AG04449 (cell line): ENCODE measurements at regions of chr10 and their contacts with region 1.

Region 1: GRCh38 chr10:119207367-119207668 is at the start of gene GRK5:
- DNase-seq: peak; percentile 74
- H3K4me3 ChIP-seq: peak within 1 kb of the TSS; percentile 79
- CTCF ChIP-seq: no peak

Region 2: DNA sequence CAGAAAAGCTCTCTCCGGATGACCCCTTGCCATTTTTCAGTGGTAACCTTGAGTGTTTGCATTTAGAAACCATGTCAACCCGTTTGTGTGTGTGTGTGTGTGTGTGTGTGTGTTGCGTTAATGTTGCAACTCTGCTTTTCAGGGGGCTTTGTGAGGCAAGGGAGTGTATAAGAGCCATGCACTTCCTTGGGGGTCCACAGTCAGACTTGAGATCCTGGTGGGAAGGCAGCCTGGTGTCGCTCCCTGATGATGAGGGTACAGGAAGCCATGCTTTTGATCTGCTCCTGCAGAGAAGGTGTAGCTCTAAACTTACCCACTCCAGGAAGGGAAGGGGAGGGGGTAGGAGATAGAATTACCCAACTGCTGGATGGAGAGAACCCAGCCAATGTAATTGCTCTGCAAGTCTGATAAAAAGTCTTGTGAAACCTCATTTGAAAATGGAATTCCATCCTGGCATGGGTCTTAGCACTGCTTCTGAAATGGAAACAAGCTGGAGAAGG is 10.7 kb after region 1 on chr10:
- CTCF ChIA-PET with region 1: interaction called, 80 read pairs
- POLR2A ChIA-PET with region 1: no interaction called
- DNase-seq: no peak
- H3K4me3 ChIP-seq: no peak overlapping the region
- CTCF ChIP-seq: no peak

Region 3: DNA sequence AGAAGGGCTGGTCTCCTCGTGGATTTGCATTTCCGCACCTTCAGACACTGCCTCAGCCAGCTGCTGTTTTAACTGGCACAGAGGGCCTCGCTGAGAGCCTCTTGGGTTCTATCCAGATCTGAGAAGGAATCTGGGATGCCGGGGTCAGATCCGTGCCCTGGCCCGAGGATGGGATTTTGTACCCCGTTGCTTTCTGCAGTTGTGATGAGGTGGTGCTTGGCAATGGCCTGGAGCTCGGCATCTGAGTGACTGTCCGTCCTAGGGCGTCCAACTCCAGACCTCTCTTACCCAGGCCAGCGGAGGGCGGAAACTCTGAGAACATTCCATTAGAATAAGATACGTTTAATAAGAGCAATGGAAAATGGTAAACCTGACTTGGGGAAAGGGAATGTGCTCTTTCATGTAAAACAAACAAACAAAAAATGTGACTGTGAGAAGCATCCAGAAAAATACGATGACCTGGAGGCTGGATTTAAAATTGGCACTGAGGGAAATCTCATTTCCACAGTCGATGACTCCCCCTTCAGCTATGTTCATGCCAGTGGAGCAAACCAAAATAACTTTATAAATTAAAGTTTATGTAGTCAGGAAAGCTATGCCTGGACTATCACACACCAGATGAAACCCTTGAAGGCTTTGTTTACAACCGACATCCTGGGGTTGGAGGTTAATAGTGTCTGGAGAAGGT is 39.7 kb after region 1 on chr10:
- CTCF ChIA-PET with region 1: interaction called, 24 read pairs
- POLR2A ChIA-PET with region 1: interaction called, 6 read pairs
- DNase-seq: peak; percentile 87
- H3K4me3 ChIP-seq: no peak overlapping the region
- CTCF ChIP-seq: no peak

Region 4: DNA sequence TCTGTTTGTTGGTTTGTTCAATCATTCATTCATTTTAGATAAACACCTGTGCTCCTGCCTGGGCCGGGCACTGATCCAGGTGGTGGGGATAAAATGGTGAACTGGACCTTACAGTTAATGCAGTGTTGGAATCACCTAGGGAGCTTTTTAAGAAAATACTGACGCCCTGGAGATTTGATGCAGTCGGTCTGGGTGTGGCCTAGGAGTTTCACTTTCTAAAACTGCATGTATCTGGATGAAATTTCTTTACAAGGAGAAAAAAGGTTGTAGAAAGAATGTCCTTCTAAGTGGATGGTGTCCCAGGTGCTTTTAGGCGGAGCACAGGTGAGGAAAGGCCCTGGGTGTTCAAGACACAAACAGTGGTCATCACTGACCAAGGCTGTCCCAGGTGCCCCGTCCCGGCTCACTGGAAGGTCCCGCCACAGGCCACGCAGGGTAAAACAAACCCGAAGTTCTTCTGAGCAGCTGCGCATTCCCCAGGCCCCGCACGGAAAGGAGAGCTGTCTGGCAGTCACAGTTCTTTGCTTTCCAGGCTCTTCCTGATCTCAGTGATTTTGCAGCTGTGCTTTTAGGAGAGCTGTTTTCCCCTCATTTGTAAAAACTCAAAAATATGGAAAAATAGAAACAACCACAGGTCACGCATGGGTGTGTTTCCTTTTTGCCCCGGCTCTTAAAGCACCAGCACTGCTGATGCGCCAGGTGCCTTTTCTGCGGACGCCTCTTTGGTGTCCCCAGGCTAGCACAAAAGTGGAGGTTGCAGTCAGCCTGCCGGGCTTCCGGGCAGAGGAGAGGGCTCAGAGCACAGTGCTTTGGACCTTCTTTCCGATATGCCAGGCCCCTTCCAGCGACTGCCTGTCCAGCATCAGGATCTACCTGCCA is 161.9 kb after region 1 on chr10:
- CTCF ChIA-PET with region 1: interaction called, 13 read pairs
- POLR2A ChIA-PET with region 1: no interaction called
- DNase-seq: no peak
- H3K4me3 ChIP-seq: no peak overlapping the region
- CTCF ChIP-seq: no peak

Region 5: DNA sequence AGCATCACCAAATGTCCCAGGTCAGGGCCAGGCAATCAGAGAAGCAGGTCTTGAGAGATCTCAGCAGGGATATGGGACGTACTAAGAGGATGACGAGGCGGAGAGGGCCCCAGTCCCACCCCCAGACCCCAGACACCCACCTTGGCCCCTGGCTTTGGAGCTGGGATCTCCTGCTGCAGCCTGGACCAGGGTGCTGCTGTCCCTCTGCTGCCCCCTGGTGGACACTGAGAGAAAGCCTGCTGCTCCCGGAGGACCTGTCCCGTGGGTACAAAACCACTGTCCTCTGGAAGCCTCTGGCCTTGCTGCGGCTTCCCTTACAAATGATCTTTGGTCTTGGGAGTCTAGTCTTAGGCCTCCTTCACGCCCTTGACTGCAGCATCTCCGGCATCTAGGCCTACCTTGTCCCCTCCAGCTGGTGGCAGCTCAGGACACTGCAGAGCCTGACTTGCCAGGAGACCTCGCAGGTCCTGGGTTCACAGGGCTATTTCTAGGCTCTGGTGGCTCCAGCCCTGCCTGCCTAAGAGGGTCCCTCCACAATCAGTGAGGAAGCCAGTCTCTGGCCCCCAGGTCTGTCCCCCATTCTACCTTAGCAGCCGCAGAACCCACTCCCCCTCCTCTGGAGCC is 238.1 kb after region 1 on chr10:
- CTCF ChIA-PET with region 1: interaction called, 530 read pairs
- POLR2A ChIA-PET with region 1: interaction called, 3 read pairs
- DNase-seq: peak; percentile 16
- H3K4me3 ChIP-seq: no peak overlapping the region
- CTCF ChIP-seq: peak; percentile 93

Region 6: GRCh38 chr10:119542988-119543813 is 335.9 kb after region 1 on chr10:
- CTCF ChIA-PET with region 1: interaction called, 117 read pairs
- POLR2A ChIA-PET with region 1: interaction called, 11 read pairs
- DNase-seq: no peak
- H3K4me3 ChIP-seq: peak overlapping the region; percentile 69
- CTCF ChIP-seq: peak; percentile 51